ENCODE measurements at regions of chr6 and their contacts with region 1.

Region 1: GRCh38 chr6:24919004-24919892 is 16.5 kb downstream of the RIPOR2 start:
- DNase-seq: peak in 2 of 3 donors; percentile 65 to 82
- H3K4me3 ChIP-seq: peak overlapping the region in 3 of 7 experiments; percentile 0 to 44 (median 27)
- H3K27ac ChIP-seq: peak overlapping the region in 1 of 2 experiments; percentile 28
- H3K4me1 ChIP-seq: peaks cover 23 to 40% (median 26%) of the 10 kb centered on the region in 4 experiments
- H3K27me3 ChIP-seq: no peaks in the 10 kb centered on the region

Region 2: GRCh38 chr6:24899997-24900325 is 19.3 kb before region 1 on chr6:
- CTCF ChIA-PET with region 1: interaction called, 13 read pairs
- POLR2A ChIA-PET with region 1: no interaction called
- DNase-seq: peak in 2 of 3 donors; percentile 25 to 51
- H3K4me3 ChIP-seq: peak overlapping the region in 1 of 7 experiments; percentile 8
- H3K27ac ChIP-seq: peak overlapping the region in 1 of 2 experiments; percentile 47
- H3K4me1 ChIP-seq: peaks cover 0 to 18% (median 2%) of the 10 kb centered on the region in 4 experiments
- H3K27me3 ChIP-seq: no peaks in the 10 kb centered on the region